Common myeloid progenitor, CD34-positive (primary cell): ENCODE measurements at regions of chr16 and their contacts with region 1.

Region 1: GRCh38 chr16:50297301-50298067 is 31.1 kb downstream of the ADCY7 start:
- DNase-seq: peak in 2 of 3 donors; percentile 69 to 83
- H3K4me3 ChIP-seq: no peak overlapping the region
- H3K27ac ChIP-seq: no peak overlapping the region
- H3K4me1 ChIP-seq: peaks cover 0 to 16% (median 8%) of the 10 kb centered on the region in 4 experiments
- H3K27me3 ChIP-seq: no peaks in the 10 kb centered on the region

Region 2: GRCh38 chr16:50224286-50224685 is 73.2 kb before region 1 on chr16:
- CTCF ChIA-PET with region 1: no interaction called
- POLR2A ChIA-PET with region 1: no interaction called
- DNase-seq: no peak
- H3K4me3 ChIP-seq: no peak overlapping the region
- H3K27ac ChIP-seq: no peak overlapping the region
- H3K4me1 ChIP-seq: no peaks in the 10 kb centered on the region
- H3K27me3 ChIP-seq: no peaks in the 10 kb centered on the region

Region 3: DNA sequence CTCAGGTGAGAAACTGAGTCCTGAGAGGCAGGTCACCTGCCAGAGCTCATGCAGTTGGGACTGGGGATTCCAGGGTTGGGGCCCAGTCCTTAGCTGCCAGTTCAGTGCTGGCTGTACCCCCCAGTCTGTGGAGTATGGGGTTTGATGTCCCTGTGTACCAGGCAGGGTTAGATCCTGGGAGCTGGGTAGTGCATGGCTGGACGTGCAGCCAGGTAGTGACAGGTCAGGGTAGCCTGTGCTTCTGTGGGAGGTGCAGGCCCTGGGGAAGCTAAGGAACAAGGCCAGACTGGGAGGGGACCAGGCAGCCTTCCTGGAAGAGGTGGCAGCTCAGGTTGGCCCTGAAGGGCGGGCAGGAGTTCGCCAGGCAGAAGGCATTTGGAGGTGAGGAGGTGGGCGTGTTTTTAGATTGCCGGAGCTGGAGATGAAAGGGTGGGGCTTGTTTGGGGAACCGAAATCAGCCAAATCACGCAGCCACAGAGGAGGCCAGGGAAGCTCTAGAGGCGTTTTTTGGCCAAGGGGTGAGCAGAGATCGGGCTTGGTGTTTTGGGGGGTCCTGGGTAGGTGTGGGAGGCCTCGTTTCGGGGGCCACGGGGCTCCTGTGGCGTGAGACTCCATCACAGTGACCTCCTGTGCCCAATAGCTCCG is 23.7 kb before region 1 on chr16:
- CTCF ChIA-PET with region 1: interaction called, 14 read pairs
- POLR2A ChIA-PET with region 1: interaction called, 3 read pairs
- DNase-seq: peak; percentile 83 to 96 (median 95)
- H3K4me3 ChIP-seq: peak overlapping the region in 6 of 7 experiments; percentile 6 to 71 (median 67)
- H3K27ac ChIP-seq: peak overlapping the region; percentile 72 to 84
- H3K4me1 ChIP-seq: peaks cover 4 to 93% (median 63%) of the 10 kb centered on the region in 4 experiments
- H3K27me3 ChIP-seq: no peaks in the 10 kb centered on the region